A549 (cell line): ENCODE measurements at regions of chr17 and their contacts with region 1.

Region 1: DNA sequence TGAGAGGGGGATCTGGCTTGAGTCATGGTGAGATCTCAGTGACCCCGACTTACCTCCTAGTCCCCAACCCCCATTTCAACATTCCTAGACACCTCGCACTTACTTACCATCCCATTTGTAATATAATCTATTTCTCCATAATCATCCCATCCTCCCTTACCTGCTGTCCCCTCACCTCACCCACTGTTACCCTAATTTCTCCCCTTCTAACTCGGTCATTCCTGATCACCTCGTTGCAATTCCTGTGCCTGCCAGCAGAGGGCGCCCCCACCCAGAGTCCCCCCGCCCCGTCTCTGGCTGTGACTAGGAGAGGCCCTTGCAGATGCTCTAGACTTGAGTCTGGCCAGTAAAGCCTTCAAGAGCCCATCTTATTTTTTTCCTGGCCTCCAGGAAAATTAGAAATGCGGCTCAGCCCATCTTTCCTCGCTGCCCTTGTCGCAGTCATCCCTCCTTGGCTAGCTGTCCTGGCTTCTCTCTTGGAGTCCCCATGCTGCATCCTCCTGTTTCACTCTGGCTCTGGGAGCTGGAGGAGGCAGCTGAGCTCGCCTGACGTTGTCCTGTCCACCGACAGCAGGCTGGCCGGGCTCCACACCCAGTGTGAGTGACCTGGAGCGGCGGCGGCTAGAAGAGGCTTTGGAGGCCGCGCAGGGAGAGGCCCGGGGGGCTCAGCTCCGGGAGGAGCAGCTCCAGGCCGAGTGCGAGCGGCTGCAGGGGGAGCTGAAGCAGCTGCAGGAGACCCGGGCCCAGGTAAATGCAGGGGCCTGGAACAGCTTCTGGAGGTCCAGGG is 5.0 kb downstream of the TBKBP1 start:
- DNase-seq: peak; percentile 61 to 97
- ATAC-seq: peak; percentile 41 to 71; a peak in 5 of 6 replicates
- H3K4me3 ChIP-seq: no peak overlapping the region
- H3K27ac ChIP-seq: no peak overlapping the region
- H3K4me1 ChIP-seq: peaks cover 4% of the 10 kb centered on the region; the same call in 1 of the 3 replicates
- CTCF ChIP-seq: peak; percentile 96
- EP300 ChIP-seq: no peak
- POLR2A ChIP-seq: no peak
- RAD21 ChIP-seq: peak; percentile 71 to 80

Region 2: DNA sequence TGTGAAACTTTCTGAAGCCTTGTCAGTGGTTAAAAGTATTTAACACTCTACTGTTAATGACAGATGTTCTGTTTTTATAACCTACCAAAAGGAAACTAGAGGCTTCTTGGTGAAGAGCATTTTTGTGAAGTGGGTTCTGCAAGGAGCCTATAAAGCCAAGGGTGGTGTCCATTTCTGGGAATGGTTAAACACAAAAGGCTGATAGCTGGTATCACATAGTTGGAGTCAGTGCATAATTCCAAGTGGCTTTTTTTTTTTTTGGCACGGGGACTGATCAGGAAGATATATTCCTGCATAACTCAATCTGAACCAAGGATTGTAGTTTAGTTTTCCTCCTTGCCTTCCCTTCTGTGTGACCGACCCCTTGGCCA is 76.8 kb before region 1 on chr17:
- CTCF ChIA-PET with region 1: no interaction called
- POLR2A ChIA-PET with region 1: no interaction called
- DNase-seq: no peak
- ATAC-seq: no peak
- H3K4me3 ChIP-seq: no peak overlapping the region
- H3K27ac ChIP-seq: peak overlapping the region; percentile 61 to 85
- H3K4me1 ChIP-seq: peaks cover 34% of the 10 kb centered on the region
- CTCF ChIP-seq: no peak
- EP300 ChIP-seq: no peak
- POLR2A ChIP-seq: no peak
- RAD21 ChIP-seq: no peak

Region 3: GRCh38 chr17:47675380-47676198 is 23.4 kb before region 1 on chr17:
- CTCF ChIA-PET with region 1: interaction called, 10 read pairs
- POLR2A ChIA-PET with region 1: no interaction called
- DNase-seq: no peak
- ATAC-seq: no peak
- H3K4me3 ChIP-seq: no peak overlapping the region
- H3K27ac ChIP-seq: no peak overlapping the region
- H3K4me1 ChIP-seq: no peaks in the 10 kb centered on the region
- CTCF ChIP-seq: no peak
- EP300 ChIP-seq: no peak
- POLR2A ChIP-seq: no peak
- RAD21 ChIP-seq: no peak

Region 4: GRCh38 chr17:47708863-47709541 is 10.1 kb after region 1 on chr17:
- CTCF ChIA-PET with region 1: interaction called, 130 read pairs
- POLR2A ChIA-PET with region 1: interaction called, 3 read pairs
- DNase-seq: no peak
- ATAC-seq: no peak
- H3K4me3 ChIP-seq: no peak overlapping the region
- H3K27ac ChIP-seq: no peak overlapping the region
- H3K4me1 ChIP-seq: no peaks in the 10 kb centered on the region
- CTCF ChIP-seq: no peak
- EP300 ChIP-seq: no peak
- POLR2A ChIP-seq: no peak
- RAD21 ChIP-seq: no peak

Region 5: GRCh38 chr17:47725446-47726111 is 26.6 kb after region 1 on chr17:
- CTCF ChIA-PET with region 1: interaction called, 87 read pairs
- POLR2A ChIA-PET with region 1: no interaction called
- DNase-seq: no peak
- ATAC-seq: no peak
- H3K4me3 ChIP-seq: no peak overlapping the region
- H3K27ac ChIP-seq: no peak overlapping the region
- H3K4me1 ChIP-seq: peaks cover 6% of the 10 kb centered on the region
- CTCF ChIP-seq: no peak
- EP300 ChIP-seq: no peak
- POLR2A ChIP-seq: no peak
- RAD21 ChIP-seq: no peak

Region 6: GRCh38 chr17:47742319-47743181 is 43.6 kb after region 1 on chr17:
- CTCF ChIA-PET with region 1: interaction called, 87 read pairs
- POLR2A ChIA-PET with region 1: no interaction called
- DNase-seq: no peak
- ATAC-seq: peak in 1 of 2 experiments; percentile 70; a peak in 4 of 6 replicates
- H3K4me3 ChIP-seq: no peak overlapping the region
- H3K27ac ChIP-seq: no peak overlapping the region
- H3K4me1 ChIP-seq: no peaks in the 10 kb centered on the region
- CTCF ChIP-seq: peak; percentile 26; the same call in 2 of the 3 replicates
- EP300 ChIP-seq: no peak
- POLR2A ChIP-seq: no peak
- RAD21 ChIP-seq: peak; percentile 40 to 54; a peak in 4 of 5 replicates

Region 7: DNA sequence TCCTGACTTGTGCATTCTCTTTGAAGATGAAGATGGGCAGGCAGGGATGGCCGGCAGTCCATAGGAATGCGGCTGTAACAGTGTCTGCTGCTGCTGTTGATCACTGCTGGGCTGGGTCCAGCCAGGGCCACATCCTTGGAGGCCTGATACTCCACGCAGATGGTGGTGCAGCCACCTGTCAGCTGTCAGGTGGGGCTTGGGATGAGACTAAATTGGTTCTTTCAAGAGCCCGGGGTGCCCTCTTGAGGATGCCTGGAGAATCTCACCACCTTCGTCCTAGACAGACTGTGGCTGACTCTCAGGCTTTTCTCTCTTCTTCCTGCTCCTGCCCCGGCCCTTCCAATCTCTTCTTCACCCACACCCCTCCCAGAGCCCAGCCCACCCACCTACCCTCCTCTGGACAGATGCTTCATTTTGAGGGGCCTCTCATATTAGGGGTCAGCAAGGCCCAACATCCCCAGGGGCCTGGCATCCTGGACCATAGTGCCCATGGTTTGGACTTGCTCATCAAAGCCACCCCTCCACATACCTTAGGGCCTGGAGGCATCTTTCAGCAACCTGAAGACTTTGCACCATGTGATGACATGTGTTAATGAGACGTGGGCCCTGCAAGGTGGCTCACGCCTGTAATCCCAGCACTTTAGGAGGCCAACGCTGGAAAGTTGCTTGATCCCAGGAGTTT is 103.5 kb after region 1 on chr17:
- CTCF ChIA-PET with region 1: interaction called, 27 read pairs
- POLR2A ChIA-PET with region 1: no interaction called
- DNase-seq: peak; percentile 77 to 92
- ATAC-seq: peak; percentile 91 to 95
- H3K4me3 ChIP-seq: no peak overlapping the region
- H3K27ac ChIP-seq: no peak overlapping the region
- H3K4me1 ChIP-seq: no peaks in the 10 kb centered on the region
- CTCF ChIP-seq: peak; percentile 84
- EP300 ChIP-seq: no peak
- POLR2A ChIP-seq: no peak
- RAD21 ChIP-seq: peak; percentile 89 to 90